GM23248 (cell line): ENCODE measurements at regions of chr1 and their contacts with region 1.

Region 1: GRCh38 chr1:43073490-43074230 is 98.4 kb downstream of the EBNA1BP2 start:
- DNase-seq: peak; percentile 83
- H3K4me3 ChIP-seq: no peak overlapping the region
- H3K27ac ChIP-seq: no peak overlapping the region
- H3K4me1 ChIP-seq: no peaks in the 10 kb centered on the region
- H3K27me3 ChIP-seq: no peaks in the 10 kb centered on the region

Region 2: DNA sequence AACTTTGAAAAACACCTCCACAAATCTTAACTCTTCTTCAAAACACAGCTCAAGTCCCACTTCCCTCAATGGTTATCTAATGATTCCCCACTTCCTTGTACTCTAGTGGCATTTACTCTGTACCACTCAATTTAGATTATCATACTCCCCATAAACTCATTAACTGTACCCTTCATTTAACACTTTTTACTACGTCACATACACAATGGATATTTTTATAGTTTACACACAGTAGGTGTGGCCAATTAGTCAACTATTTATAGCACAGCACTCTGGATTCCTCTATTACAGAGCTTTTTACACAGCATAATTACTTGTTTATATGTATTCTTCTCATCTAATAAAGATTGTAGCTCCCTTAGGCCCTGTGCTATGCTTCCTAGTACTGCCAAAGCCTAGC is 800.7 kb before region 1 on chr1:
- in situ Hi-C with region 1: no loop called
- DNase-seq: no peak
- H3K4me3 ChIP-seq: no peak overlapping the region
- H3K27ac ChIP-seq: no peak overlapping the region
- H3K4me1 ChIP-seq: no peaks in the 10 kb centered on the region
- H3K27me3 ChIP-seq: no peaks in the 10 kb centered on the region

Region 3: DNA sequence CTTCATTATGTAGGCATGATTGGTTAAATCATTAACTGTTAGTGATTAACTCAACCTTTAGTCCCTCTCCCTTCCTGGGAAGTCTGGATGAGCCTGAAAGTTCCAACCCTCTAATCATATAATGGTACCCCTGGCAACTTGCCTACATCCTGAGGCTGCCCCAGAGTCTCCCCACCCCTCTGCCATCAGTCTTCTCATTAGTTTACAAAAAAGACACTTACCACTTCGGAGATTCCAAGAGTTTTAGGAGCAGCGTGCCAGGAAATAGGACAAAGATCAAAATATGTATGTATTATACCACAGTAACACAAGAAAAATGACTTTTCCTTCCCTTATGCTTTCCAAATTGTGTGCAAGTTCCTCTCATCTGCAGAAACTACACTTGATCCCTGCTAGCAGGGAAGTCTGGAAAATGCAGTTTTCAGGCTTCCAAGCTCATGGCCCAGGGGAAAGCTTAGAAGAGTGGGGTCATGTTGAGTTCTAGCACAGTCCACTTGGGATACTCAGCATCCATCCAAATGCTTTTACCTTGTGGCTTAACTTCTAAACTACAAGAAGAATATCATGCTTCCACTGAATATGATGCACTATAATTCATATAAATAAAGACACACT is 480.1 kb before region 1 on chr1:
- in situ Hi-C with region 1: loop called (anchors 25 kb)
- DNase-seq: no peak
- H3K4me3 ChIP-seq: no peak overlapping the region
- H3K27ac ChIP-seq: no peak overlapping the region
- H3K4me1 ChIP-seq: no peaks in the 10 kb centered on the region
- H3K27me3 ChIP-seq: no peaks in the 10 kb centered on the region; the same call in 1 of the 2 replicates

Region 4: DNA sequence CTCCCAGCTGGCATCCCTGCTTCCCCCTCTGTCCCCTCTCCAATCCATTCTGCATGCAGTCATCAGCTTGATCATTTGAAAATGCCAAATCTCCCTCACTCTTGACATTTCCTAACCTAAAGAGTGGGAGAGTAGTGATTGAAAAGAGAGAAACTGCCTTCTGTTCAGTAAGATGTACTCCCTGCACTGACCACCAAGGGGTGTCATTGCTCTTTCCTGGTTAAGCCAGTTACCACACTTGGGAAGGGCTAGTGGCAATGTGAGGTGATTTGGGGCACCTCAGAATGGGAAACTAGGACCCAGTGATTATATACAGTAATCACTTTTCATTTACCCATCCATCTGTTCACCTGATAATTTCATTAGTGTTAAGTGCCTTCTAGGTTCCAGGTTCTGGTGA is 295.8 kb before region 1 on chr1:
- in situ Hi-C with region 1: loop called (anchors 10 kb)
- DNase-seq: peak; percentile 65
- H3K4me3 ChIP-seq: no peak overlapping the region
- H3K27ac ChIP-seq: no peak overlapping the region
- H3K4me1 ChIP-seq: no peaks in the 10 kb centered on the region
- H3K27me3 ChIP-seq: no peaks in the 10 kb centered on the region

Region 5: GRCh38 chr1:43206600-43207228 is 133.1 kb after region 1 on chr1:
- in situ Hi-C with region 1: no loop called
- DNase-seq: peak; percentile 96
- H3K4me3 ChIP-seq: peak overlapping the region; percentile 31
- H3K27ac ChIP-seq: peak overlapping the region; percentile 88
- H3K4me1 ChIP-seq: peaks cover 27% of the 10 kb centered on the region
- H3K27me3 ChIP-seq: no peaks in the 10 kb centered on the region